ENCODE measurements at regions of chr10 and their contacts with region 1.

Region 1: GRCh38 chr10:113283189-113283588 is 269.7 kb upstream of the HABP2 start:
- DNase-seq: no peak
- ATAC-seq: no peak
- H3K4me3 ChIP-seq: no peak overlapping the region
- H3K27ac ChIP-seq: no peak overlapping the region
- H3K4me1 ChIP-seq: peaks cover 0 to 6% (median 0%) of the 10 kb centered on the region in 9 donors
- H3K27me3 ChIP-seq: no peaks in the 10 kb centered on the region
- CTCF ChIP-seq: peak in 1 of 9 donors; percentile 6

Region 2: DNA sequence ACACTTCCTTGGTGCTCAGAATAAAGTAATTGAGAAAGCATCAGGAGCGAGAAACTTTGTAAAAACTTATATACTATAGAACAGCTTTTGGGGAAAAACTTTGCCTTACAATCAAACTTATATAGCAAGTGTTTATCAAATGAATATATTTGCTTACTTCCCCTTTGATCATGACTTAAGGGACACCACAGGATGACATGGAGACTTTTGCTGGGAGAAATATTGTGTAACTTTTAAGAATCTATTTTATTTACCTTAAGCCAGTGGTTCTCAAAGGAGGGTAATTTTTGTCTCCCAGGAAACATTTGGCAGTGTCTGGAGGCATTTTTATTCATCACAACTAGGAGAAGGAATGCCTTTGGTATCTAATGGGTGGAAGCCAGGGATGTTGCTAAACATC is 95.9 kb after region 1 on chr10:
- intact Hi-C with region 1: loop called in 1 of 10 experiments (anchors 5 kb)
- DNase-seq: no peak
- ATAC-seq: no peak
- H3K4me3 ChIP-seq: no peak overlapping the region
- H3K27ac ChIP-seq: no peak overlapping the region
- H3K4me1 ChIP-seq: peaks cover 0 to 18% (median 12%) of the 10 kb centered on the region in 9 donors
- H3K27me3 ChIP-seq: no peaks in the 10 kb centered on the region
- CTCF ChIP-seq: no peak